Activated B cell treated with CpG ODN at 0.5 μM for 24 hours (primary cell): ENCODE measurements at regions of chr20 and their contacts with region 1.

Region 1: DNA sequence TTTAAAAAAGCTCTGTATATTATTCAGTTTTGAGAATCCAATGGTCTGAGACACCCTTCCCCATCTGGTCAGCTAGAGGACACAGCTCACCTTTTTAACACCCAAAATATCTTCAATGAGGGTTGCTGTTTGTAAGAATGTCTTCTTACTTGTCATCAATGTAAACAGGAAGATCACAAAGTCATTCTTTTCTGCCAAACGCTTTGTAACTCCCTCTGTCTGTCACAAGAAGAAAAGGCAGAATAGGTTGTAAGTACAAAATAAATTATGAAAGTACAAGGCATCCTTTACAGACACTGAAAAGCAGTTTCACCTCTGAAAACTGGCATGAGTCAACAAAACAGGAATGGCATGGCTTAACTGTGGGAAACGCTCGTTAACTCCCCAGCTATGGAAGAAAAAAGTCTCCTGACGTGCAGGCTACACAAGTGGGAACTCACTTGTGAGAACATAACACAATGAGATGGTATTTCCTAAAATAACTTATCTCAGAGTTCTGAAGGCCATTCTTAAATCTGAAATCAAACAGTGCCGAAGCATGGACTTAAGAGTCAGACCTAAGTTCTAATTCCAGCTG is 42.7 kb downstream of the TRPC4AP start:
- DNase-seq: no peak
- ATAC-seq: no peak
- H3K4me3 Mint-ChIP-seq: no peak overlapping the region
- H3K27ac Mint-ChIP-seq: no peak overlapping the region
- H3K4me1 Mint-ChIP-seq: peaks cover 3% of the 10 kb centered on the region
- H3K27me3 Mint-ChIP-seq: no peaks in the 10 kb centered on the region
- CTCF ChIP-seq: no peak

Region 2: DNA sequence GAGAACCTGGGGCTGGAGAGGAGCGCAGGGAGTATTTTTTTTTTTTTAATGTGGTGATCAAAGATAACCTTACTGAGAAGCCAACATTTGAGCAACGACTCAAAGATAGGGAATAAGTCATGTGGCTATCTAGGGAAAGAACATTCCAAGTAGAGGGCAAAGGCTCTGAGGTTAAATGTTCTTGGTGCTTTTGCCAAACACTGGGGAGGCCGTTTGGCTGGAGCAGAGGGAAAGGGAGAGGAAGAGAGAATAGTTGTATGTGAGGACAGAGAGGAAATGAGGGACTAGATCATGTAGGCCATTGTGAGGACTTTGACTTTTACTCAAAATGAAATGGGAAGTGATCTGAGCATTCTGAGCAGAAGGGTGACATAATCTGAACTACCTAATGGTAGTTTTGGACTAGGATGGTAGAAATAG is 145.7 kb before region 1 on chr20:
- CTCF ChIA-PET with region 1: no interaction called
- POLR2A ChIA-PET with region 1: interaction called, 11 read pairs
- intact Hi-C with region 1: no loop called
- DNase-seq: no peak
- ATAC-seq: no peak
- H3K4me3 Mint-ChIP-seq: no peak overlapping the region
- H3K27ac Mint-ChIP-seq: no peak overlapping the region
- H3K4me1 Mint-ChIP-seq: no peaks in the 10 kb centered on the region
- H3K27me3 Mint-ChIP-seq: no peaks in the 10 kb centered on the region
- CTCF ChIP-seq: no peak